Activated naive CD4-positive, alpha-beta T cell treated with anti-CD3 and anti-CD28 coated beads for 36 hours (primary cell): ENCODE measurements at regions of chr1 and their contacts with region 1.

Region 1: GRCh38 chr1:89987170-89987819 is 7.6 kb upstream of the ZNF326 start:
- DNase-seq: peak; percentile 68
- H3K4me3 Mint-ChIP-seq: no peak overlapping the region
- H3K27ac Mint-ChIP-seq: no peak overlapping the region
- H3K4me1 Mint-ChIP-seq: peaks cover 12% of the 10 kb centered on the region
- H3K27me3 Mint-ChIP-seq: no peaks in the 10 kb centered on the region

Region 2: DNA sequence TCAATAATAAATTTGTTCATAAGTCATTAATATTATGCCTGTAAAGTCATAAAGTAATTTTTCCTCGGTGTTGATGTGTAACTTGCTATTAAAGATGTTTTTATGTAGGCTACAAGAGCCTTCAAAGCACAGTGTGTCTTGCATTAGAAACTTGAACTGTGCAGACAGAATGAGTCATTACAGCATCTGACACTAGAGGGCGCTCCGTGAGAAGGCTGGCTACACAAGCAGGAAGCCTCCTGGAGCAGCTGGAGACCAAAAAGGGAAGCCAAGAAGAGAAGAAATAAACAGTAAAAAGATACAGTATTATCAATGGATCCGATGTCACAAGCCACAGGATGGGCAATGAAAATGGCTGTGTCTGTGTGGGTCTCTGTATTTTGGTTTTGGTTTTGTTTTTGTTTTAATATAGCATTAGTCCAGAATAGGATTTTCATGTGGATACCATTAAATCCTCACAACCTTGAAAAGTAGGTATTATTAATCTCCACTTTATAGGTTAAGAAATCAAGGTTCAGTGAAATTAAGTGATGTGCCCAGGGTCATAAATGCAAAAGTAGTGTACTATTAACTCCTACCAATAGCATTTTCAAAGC is 182.6 kb before region 1 on chr1:
- CTCF ChIA-PET with region 1: interaction called, 52 read pairs
- intact Hi-C with region 1: loop called (anchors 1 kb)
- DNase-seq: peak; percentile 96
- H3K4me3 Mint-ChIP-seq: no peak overlapping the region
- H3K27ac Mint-ChIP-seq: no peak overlapping the region
- H3K4me1 Mint-ChIP-seq: no peaks in the 10 kb centered on the region
- H3K27me3 Mint-ChIP-seq: peaks cover 2% of the 10 kb centered on the region

Region 3: DNA sequence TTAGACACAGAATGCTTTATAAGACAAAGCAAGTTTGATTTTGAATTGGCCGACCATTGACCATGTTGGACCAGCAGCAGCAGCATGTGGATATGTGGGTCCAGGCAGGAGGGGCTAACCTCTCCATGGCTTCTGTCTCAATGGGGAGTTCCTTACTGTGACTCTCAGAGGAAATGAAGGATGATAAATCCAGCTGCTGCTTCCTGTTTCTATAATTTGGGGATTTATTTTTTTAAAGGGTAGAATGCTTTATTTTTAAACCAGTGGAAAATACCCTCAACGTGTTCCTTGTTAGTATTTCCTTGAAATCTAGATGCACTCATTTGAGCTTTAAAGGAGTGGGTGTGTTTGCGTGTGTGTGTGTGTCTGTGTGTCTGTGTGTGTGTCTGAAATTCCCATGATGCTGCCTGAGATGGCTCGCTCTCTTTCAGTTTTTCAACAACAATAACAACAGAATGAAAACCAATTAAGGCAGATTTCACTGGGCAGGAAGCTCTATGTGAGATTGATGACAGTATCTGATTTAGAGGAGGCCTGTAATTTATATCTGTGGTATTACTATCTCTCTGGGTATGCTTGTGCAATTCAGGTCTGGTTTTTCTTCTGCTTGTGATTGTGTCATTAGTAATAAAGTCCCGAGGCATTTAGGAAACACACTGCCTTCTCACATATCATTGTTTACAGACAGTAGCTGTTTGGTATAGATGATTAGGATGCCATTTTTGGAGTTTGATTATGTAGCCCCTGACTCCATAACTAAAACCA is 78.4 kb before region 1 on chr1:
- CTCF ChIA-PET with region 1: interaction called, 3 read pairs
- intact Hi-C with region 1: loop called (anchors 1 kb)
- DNase-seq: peak; percentile 25
- H3K4me3 Mint-ChIP-seq: no peak overlapping the region
- H3K27ac Mint-ChIP-seq: peak overlapping the region; percentile 71
- H3K4me1 Mint-ChIP-seq: peaks cover 47% of the 10 kb centered on the region
- H3K27me3 Mint-ChIP-seq: no peaks in the 10 kb centered on the region

Region 4: DNA sequence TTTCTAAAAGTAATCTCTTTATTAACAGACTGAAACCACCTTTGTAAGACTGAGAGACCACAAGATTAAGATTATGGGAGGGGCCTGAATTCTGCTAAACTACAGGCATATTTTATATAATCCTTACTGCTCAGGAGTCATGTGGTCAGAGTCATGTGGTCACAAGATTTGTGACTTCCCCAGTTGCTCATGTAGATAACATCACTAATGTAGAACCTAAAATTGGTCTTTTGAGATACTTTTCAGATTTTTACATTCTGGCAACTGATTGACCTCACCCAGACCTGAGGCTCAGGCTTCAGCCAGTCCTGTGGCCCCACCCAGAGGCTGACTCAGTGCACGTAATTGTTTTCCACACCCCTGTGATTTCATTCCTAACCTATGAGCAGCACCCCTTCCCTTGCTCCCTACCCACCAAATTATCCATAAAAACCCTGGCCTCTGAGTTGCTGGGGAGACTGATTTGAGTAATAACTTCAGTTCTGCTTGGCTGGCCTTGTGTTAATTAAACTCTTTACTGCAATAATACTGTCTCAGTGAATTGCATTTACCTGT is 34.1 kb before region 1 on chr1:
- CTCF ChIA-PET with region 1: interaction called, 4 read pairs
- intact Hi-C with region 1: loop called (anchors 1 kb)
- DNase-seq: peak; percentile 66
- H3K4me3 Mint-ChIP-seq: no peak overlapping the region
- H3K27ac Mint-ChIP-seq: no peak overlapping the region
- H3K4me1 Mint-ChIP-seq: peaks cover 18% of the 10 kb centered on the region
- H3K27me3 Mint-ChIP-seq: no peaks in the 10 kb centered on the region

Region 5: GRCh38 chr1:90048043-90048442 is 60.7 kb after region 1 on chr1:
- CTCF ChIA-PET with region 1: no interaction called
- intact Hi-C with region 1: no loop called
- DNase-seq: no peak
- H3K4me3 Mint-ChIP-seq: no peak overlapping the region
- H3K27ac Mint-ChIP-seq: no peak overlapping the region
- H3K4me1 Mint-ChIP-seq: no peaks in the 10 kb centered on the region
- H3K27me3 Mint-ChIP-seq: peaks cover 5% of the 10 kb centered on the region